ENCODE measurements at regions of chr10 and their contacts with region 1.

Region 1: DNA sequence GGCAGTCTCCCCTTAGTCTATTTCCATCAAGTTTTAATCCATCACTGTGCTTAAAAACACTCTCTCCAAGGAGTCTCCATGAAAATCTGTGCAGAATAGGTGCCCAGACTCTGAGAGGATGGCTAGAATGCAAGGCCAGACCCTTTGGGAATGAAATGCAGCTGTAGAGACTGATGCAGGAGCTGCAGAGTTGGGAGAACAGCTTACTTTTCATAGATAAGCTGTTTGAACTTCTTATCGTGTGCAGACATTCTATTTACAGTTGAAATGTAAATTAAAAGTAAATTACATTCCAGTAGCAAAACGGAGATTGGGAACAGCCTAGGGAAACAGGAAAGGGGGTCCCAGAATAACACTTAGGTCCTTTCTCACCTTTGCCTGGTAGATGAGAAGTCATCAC is 14.9 kb downstream of the ZNF22 start:
- DNase-seq: no peak
- H3K4me3 ChIP-seq: no peak overlapping the region
- H3K27ac ChIP-seq: no peak overlapping the region
- H3K4me1 ChIP-seq: no peaks in the 10 kb centered on the region
- H3K27me3 ChIP-seq: no peaks in the 10 kb centered on the region
- CTCF ChIP-seq: no peak

Region 2: GRCh38 chr10:45034301-45034700 is 18.7 kb after region 1 on chr10:
- intact Hi-C with region 1: loop called (anchors 2 kb)
- DNase-seq: no peak
- H3K4me3 ChIP-seq: no peak overlapping the region
- H3K27ac ChIP-seq: no peak overlapping the region
- H3K4me1 ChIP-seq: no peaks in the 10 kb centered on the region
- H3K27me3 ChIP-seq: no peaks in the 10 kb centered on the region
- CTCF ChIP-seq: no peak